ENCODE measurements at regions of chr5 and their contacts with region 1.

Region 1: DNA sequence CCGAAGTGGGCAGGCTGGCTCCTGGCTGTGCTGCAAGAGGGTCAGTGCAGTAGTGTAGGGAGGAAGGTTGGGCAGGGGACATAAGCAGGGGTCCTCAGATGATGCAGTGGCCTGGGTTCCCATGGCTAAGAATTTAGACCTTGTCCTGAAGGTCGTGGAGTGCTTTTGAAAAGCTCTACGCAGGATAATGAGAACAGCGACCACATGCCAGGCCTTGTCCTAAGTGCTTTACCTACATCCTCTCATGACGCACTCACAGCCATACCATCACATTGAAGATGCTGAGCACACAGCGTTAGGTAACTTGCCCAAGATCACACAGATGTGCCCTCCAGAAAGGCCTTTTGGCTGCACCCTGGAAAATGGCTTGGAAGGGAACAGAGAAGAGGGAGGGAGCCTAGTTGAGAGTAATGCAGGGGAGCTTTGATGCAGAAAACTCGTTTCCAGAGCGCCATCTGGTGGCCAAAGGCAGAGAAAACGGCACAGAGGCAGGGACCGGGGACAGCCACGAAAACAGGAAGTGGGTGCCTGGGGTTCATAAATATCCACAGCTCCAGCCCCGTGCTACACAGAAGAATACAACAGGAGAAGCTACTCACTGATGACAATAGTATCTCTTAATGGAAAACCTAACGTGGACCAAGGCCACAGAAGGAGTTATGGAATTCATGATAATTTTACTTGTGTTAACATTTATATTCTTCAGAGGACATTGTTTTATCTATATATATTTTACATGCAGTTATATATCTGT is 2.6 kb upstream of the PCDH12 start:
- DNase-seq: peak; percentile 87 to 95 (median 93)
- H3K4me3 ChIP-seq: no peak overlapping the region
- H3K27ac ChIP-seq: no peak overlapping the region
- H3K4me1 ChIP-seq: peaks cover 10 to 50% (median 35%) of the 10 kb centered on the region in 4 experiments
- H3K27me3 ChIP-seq: no peaks in the 10 kb centered on the region

Region 2: DNA sequence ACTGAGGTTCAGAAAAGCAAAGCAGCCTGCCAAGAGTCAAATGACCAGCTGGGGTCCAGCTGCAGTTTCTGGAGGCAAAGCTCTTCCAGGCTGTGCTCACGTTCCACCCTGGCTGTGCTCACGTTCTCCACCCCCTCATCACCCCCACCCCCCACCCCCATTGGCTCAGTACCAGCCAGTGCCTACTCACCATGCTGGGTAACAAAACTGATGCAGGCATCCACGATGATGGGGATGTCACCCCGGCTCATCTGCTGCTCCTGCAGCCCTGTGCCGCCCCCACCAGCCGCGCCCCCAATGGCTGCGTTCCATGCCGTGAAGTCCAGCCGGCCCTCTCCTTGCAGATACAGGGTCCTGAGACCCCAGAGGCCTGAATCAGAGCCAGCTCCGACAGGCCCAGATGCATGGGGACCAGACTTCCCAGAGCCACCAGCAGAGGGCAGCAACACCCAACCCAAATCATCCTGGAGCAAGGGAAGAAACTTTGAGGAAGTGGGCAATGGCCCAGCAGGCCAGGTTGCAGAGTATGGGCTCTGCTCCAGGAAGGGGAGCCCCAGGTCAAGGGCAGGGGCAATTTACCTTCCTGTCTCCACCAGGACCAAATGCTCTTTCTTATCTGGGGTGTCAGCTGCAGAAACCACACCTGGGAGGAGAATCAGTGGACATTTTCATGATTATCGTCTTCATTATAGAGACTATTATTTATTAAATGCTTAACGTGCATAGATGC is 295.7 kb before region 1 on chr5:
- CTCF ChIA-PET with region 1: interaction called, 17 read pairs
- POLR2A ChIA-PET with region 1: no interaction called
- DNase-seq: peak; percentile 80 to 90 (median 85)
- H3K4me3 ChIP-seq: peak overlapping the region in 1 of 7 experiments; percentile 28
- H3K27ac ChIP-seq: no peak overlapping the region
- H3K4me1 ChIP-seq: peaks cover 2 to 5% (median 3%) of the 10 kb centered on the region in 4 experiments
- H3K27me3 ChIP-seq: no peaks in the 10 kb centered on the region

Region 3: GRCh38 chr5:141681695-141682641 is 278.7 kb before region 1 on chr5 and contains the start of gene ARAP3:
- CTCF ChIA-PET with region 1: interaction called, 10 read pairs
- POLR2A ChIA-PET with region 1: interaction called, 3 read pairs
- DNase-seq: peak; percentile 39 to 71 (median 56)
- H3K4me3 ChIP-seq: peak within 1 kb of the TSS in 6 of 7 experiments; percentile 1 to 65 (median 46)
- H3K27ac ChIP-seq: no peak within 1 kb of the TSS
- H3K4me1 ChIP-seq: peaks cover 7 to 29% (median 23%) of the 10 kb centered on the region in 4 experiments
- H3K27me3 ChIP-seq: peaks cover 0 to 16% (median 2%) of the 10 kb centered on the region in 5 experiments

Region 4: GRCh38 chr5:141701360-141702119 is 259.1 kb before region 1 on chr5:
- CTCF ChIA-PET with region 1: interaction called, 127 read pairs
- POLR2A ChIA-PET with region 1: interaction called, 3 read pairs
- DNase-seq: peak in 1 of 3 donors; percentile 29
- H3K4me3 ChIP-seq: peak overlapping the region in 1 of 7 experiments; percentile 76
- H3K27ac ChIP-seq: no peak overlapping the region
- H3K4me1 ChIP-seq: peaks cover 2 to 15% (median 10%) of the 10 kb centered on the region in 4 experiments
- H3K27me3 ChIP-seq: peaks cover 9 to 78% (median 57%) of the 10 kb centered on the region in 5 experiments

Region 5: GRCh38 chr5:141889282-141889871 is 71.2 kb before region 1 on chr5:
- CTCF ChIA-PET with region 1: interaction called, 17 read pairs
- POLR2A ChIA-PET with region 1: no interaction called
- DNase-seq: peak in 2 of 3 donors; percentile 41 to 43
- H3K4me3 ChIP-seq: no peak overlapping the region
- H3K27ac ChIP-seq: no peak overlapping the region
- H3K4me1 ChIP-seq: no peaks in the 10 kb centered on the region
- H3K27me3 ChIP-seq: peaks cover 7 to 22% (median 11%) of the 10 kb centered on the region in 5 experiments

Region 6: DNA sequence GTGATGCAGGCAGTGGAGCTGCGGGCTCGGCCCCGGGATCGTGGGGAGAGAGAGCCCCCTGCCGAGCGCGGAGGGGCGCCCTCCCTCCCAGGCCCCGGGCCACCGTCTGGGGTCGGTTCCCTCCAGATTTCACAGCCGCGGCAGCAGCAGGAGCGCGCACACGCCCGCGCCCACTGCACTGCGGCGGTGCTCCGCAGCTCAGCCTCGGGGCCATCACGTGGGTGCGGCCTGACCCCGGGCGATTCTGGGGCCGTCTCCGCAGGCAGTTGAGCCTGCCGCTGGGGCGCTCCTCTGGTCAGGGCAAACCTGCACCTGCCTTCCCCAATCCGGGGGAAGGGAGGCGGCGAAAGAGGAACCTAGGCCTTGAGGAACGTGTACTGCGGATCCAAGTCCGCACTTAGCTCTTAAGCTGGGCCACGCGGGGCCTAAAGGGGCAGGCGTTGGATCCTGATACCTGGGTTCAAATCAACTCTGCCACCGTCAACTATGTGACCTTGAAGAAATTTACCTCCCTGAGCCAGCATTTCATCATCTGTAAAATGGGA is 46.4 kb before region 1 on chr5:
- CTCF ChIA-PET with region 1: interaction called, 33 read pairs
- POLR2A ChIA-PET with region 1: no interaction called
- DNase-seq: peak; percentile 55 to 82 (median 74)
- H3K4me3 ChIP-seq: peak overlapping the region in 6 of 7 experiments; percentile 30 to 71 (median 58)
- H3K27ac ChIP-seq: no peak overlapping the region
- H3K4me1 ChIP-seq: peaks cover 5 to 14% (median 12%) of the 10 kb centered on the region in 4 experiments
- H3K27me3 ChIP-seq: peaks cover 0 to 8% (median 4%) of the 10 kb centered on the region in 5 experiments

Region 7: GRCh38 chr5:141940695-141941271 is 19.8 kb before region 1 on chr5:
- CTCF ChIA-PET with region 1: interaction called, 154 read pairs
- POLR2A ChIA-PET with region 1: interaction called, 3 read pairs
- DNase-seq: peak in 2 of 3 donors; percentile 15 to 28
- H3K4me3 ChIP-seq: no peak overlapping the region
- H3K27ac ChIP-seq: no peak overlapping the region
- H3K4me1 ChIP-seq: peaks cover 0 to 19% (median 14%) of the 10 kb centered on the region in 4 experiments
- H3K27me3 ChIP-seq: no peaks in the 10 kb centered on the region

Region 8: DNA sequence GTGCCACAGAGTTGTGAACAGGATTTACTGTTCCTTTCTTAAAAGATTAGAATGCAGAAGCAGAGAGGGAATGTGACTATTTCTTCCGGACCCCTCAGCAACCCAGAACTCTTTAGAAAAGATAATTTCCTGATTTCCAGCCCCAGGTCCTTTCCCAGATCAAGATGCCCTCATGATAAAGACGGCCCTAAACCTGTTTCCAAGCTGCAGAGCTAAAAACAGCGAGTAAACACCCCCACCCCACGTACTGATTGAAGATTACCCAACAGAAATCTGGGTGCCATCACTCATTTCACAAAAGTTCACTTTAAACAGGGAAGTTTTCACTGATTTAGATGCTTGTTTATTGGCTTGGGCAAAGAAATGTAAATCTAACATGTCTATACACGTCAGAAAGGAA is 43.3 kb after region 1 on chr5:
- CTCF ChIA-PET with region 1: no interaction called
- POLR2A ChIA-PET with region 1: no interaction called
- DNase-seq: no peak
- H3K4me3 ChIP-seq: no peak overlapping the region
- H3K27ac ChIP-seq: no peak overlapping the region
- H3K4me1 ChIP-seq: peaks cover 0 to 17% (median 7%) of the 10 kb centered on the region in 4 experiments
- H3K27me3 ChIP-seq: peaks cover 0 to 15% (median 3%) of the 10 kb centered on the region in 5 experiments

Region 9: GRCh38 chr5:142053426-142054151 is 93.0 kb after region 1 on chr5:
- CTCF ChIA-PET with region 1: no interaction called
- POLR2A ChIA-PET with region 1: no interaction called
- DNase-seq: peak in 2 of 3 donors; percentile 17 to 31
- H3K4me3 ChIP-seq: no peak overlapping the region
- H3K27ac ChIP-seq: no peak overlapping the region
- H3K4me1 ChIP-seq: no peaks in the 10 kb centered on the region
- H3K27me3 ChIP-seq: peaks cover 0 to 25% (median 4%) of the 10 kb centered on the region in 5 experiments

Measured in common myeloid progenitor, CD34-positive (primary cell).